ENCODE measurements at regions of chr7 and their contacts with region 1.

Region 1: GRCh38 chr7:95690367-95690947 is 81.9 kb upstream of the DYNC1I1 start:
- DNase-seq: no peak
- H3K4me3 ChIP-seq: no peak overlapping the region
- H3K27ac ChIP-seq: no peak overlapping the region
- H3K4me1 ChIP-seq: no peaks in the 10 kb centered on the region
- H3K27me3 ChIP-seq: no peaks in the 10 kb centered on the region
- CTCF ChIP-seq: peak; percentile 35 to 62 (median 37)

Region 2: GRCh38 chr7:95434557-95435421 is 255.7 kb before region 1 on chr7 and contains the start of gene PON2:
- intact Hi-C with region 1: loop called (anchors 5 kb)
- DNase-seq: peak; percentile 13 to 88
- H3K4me3 ChIP-seq: peak within 1 kb of the TSS; percentile 73 to 97
- H3K27ac ChIP-seq: peak within 1 kb of the TSS; percentile 91 to 96
- H3K4me1 ChIP-seq: peaks cover 0 to 2% of the 10 kb centered on the region in 2 donors
- H3K27me3 ChIP-seq: no peaks in the 10 kb centered on the region
- CTCF ChIP-seq: no peak
- total RNA-seq, gene PON2: 59.8 TPM

Region 3: DNA sequence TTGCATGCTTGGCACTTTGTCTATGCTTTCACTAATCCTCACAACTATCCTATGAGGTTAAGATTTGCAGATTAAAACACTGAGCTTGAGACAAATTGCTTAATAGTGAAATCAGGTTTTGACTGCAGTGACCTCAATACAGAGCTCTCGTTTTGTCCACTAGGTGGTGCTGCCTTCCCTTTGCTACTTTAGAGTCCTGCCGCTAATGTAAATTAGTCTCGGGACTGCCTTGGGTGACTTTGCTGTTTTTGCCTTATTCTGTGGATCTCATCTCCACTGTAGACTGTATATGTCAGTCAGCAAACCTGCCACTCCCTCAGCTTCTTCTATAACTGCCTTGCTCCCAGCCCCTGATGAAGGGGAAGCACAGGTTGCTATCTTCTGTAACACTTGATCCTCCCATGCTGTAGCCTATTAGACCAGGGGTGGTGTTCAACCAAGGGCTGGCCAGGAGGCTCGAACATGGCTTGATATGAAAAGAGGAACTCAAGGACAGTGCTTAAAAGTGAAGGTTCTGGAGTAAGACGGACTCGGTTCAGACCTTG is 178.7 kb before region 1 on chr7:
- intact Hi-C with region 1: loop called (anchors 1 kb)
- DNase-seq: peak in 1 of 2 donors; percentile 85
- H3K4me3 ChIP-seq: no peak overlapping the region
- H3K27ac ChIP-seq: no peak overlapping the region
- H3K4me1 ChIP-seq: no peaks in the 10 kb centered on the region
- H3K27me3 ChIP-seq: no peaks in the 10 kb centered on the region
- CTCF ChIP-seq: peak; percentile 62 to 86 (median 84)

Region 4: GRCh38 chr7:95527033-95527775 is 163.3 kb before region 1 on chr7:
- intact Hi-C with region 1: loop called (anchors 1 kb)
- DNase-seq: peak in 1 of 2 donors; percentile 69
- H3K4me3 ChIP-seq: no peak overlapping the region
- H3K27ac ChIP-seq: no peak overlapping the region
- H3K4me1 ChIP-seq: no peaks in the 10 kb centered on the region
- H3K27me3 ChIP-seq: no peaks in the 10 kb centered on the region
- CTCF ChIP-seq: peak; percentile 69 to 90 (median 78)

Region 5: GRCh38 chr7:95545078-95545498 is 145.4 kb before region 1 on chr7:
- intact Hi-C with region 1: no loop called
- DNase-seq: peak in 1 of 2 donors; percentile 81
- H3K4me3 ChIP-seq: peak overlapping the region; percentile 36 to 55
- H3K27ac ChIP-seq: peak overlapping the region; percentile 50 to 60
- H3K4me1 ChIP-seq: peaks cover 6 to 39% of the 10 kb centered on the region in 2 donors
- H3K27me3 ChIP-seq: no peaks in the 10 kb centered on the region
- CTCF ChIP-seq: peak; percentile 41 to 76 (median 72)